ENCODE measurements at regions of chr18 and their contacts with region 1.

Region 1: GRCh38 chr18:63617049-63617914 is 26.8 kb downstream of the SERPINB4 start:
- DNase-seq: no peak
- ATAC-seq: no peak
- H3K4me3 ChIP-seq: no peak overlapping the region
- H3K27ac ChIP-seq: no peak overlapping the region
- H3K4me1 ChIP-seq: no peaks in the 10 kb centered on the region
- H3K27me3 ChIP-seq: no peaks in the 10 kb centered on the region

Region 2: DNA sequence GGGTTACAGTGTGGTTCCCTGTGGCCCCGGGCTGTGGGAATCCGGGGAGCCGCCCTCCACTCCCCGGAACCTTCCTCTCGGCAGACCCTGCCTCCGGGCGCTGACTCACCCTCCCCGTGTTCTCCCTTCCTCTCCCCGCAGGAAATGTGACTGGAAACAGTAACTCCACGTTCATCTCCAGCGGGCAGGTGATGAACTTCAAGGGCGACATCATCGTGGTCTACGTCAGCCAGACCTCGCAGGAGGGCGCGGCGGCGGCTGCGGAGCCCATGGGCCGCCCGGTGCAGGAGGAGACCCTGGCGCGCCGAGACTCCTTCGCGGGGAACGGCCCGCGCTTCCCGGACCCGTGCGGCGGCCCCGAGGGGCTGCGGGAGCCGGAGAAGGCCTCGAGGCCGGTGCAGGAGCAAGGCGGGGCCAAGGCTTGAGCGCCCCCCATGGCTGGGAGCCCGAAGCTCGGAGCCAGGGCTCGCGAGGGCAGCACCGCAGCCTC is 1232.6 kb before region 1 on chr18:
- intact Hi-C with region 1: no loop called
- DNase-seq: peak in 1 of 3 donors; percentile 57
- ATAC-seq: peak; percentile 49 to 55
- H3K4me3 ChIP-seq: peak overlapping the region; percentile 23
- H3K27ac ChIP-seq: no peak overlapping the region
- H3K4me1 ChIP-seq: no peaks in the 10 kb centered on the region
- H3K27me3 ChIP-seq: no peaks in the 10 kb centered on the region

Region 3: GRCh38 chr18:63676526-63676925 is 59.2 kb after region 1 on chr18:
- intact Hi-C with region 1: loop called in 1 of 4 experiments (anchors 10 kb)
- DNase-seq: no peak
- ATAC-seq: no peak
- H3K4me3 ChIP-seq: no peak overlapping the region
- H3K27ac ChIP-seq: no peak overlapping the region
- H3K4me1 ChIP-seq: no peaks in the 10 kb centered on the region
- H3K27me3 ChIP-seq: no peaks in the 10 kb centered on the region